SK-N-SH (cell line): ENCODE measurements at regions of chr4 and their contacts with region 1.

Region 1: DNA sequence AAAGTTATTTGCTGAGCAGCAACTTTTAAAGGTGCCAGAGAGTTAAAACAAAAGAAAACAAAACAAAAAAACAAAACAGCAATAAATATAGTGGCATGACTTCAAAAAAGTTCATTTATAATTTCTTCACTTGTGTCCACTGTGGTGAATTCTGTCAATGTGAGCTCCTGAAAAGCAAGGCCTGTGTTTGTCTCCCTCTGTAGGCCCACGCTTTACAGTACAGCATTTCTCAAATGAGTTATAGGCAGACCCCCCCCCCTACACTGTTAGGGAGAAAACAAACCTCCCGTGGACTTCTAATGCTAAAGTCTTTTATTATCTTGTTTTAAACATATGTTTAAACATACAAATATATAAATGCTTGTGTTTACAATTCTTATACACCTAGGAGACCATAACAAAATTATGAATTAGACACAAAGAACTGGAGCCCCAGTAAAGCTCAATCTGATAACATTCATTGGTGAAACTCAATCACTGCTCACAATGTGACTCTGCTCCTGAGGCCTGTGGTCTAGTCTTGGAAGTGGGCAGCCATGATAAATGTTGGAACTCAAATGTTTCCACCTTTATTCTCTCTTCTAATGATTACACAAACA is 47.0 kb upstream of the SCOC start:
- DNase-seq: peak; percentile 54
- H3K4me3 ChIP-seq: peak overlapping the region in 1 of 2 experiments; percentile 26; a peak in 1 of 4 replicates
- H3K27ac ChIP-seq: no peak overlapping the region
- H3K4me1 ChIP-seq: no peaks in the 10 kb centered on the region; a peak in 1 of 4 replicates
- H3K27me3 ChIP-seq: no peaks in the 10 kb centered on the region
- CTCF ChIP-seq: peak; percentile 88
- EP300 ChIP-seq: no peak
- RAD21 ChIP-seq: peak; percentile 85

Region 2: DNA sequence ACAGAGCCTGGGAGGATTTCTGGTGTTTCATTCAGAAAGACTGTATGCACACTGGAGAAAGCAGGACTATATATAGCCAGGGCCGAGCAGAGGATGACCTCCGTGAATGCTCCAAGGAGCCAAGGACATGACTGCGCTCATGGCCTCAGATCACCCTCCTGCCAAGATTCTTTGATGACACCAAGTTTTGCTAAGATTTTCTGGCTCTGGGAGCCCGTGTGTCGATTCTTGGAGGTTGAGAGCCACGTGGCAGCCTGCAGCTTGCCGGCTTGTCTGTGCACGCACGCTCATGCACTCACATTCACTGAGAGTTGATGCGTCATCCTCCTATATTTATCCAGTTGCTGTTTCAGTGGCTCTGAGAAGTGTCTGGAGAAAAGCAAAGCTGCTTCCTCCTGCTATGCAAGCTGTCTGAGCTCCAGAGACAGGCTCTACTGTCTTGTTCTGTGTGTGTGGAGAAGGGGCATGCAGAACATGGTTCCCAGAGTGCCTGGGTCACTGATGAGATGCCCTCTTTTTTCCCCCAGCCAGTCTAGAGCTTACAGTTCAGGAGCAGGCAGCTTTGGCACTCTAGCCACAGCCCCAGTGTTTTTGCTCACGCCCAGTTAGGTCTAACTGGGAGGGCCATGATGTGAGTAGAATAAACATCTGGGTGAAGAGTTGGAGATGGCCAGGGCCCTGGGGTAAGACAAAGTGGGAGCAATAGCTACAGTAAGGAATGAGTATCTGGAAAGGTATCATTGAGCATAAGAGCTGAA is 17.9 kb before region 1 on chr4:
- CTCF ChIA-PET with region 1: interaction called, 19 read pairs
- POLR2A ChIA-PET with region 1: no interaction called
- DNase-seq: no peak
- H3K4me3 ChIP-seq: no peak overlapping the region
- H3K27ac ChIP-seq: peak overlapping the region in 1 of 2 experiments; percentile 75; a peak in 3 of 4 replicates
- H3K4me1 ChIP-seq: peaks cover 6 to 31% of the 10 kb centered on the region in 2 experiments
- H3K27me3 ChIP-seq: no peaks in the 10 kb centered on the region
- CTCF ChIP-seq: no peak
- EP300 ChIP-seq: no peak
- RAD21 ChIP-seq: no peak

Region 3: GRCh38 chr4:140315970-140316369 is 10.5 kb before region 1 on chr4:
- CTCF ChIA-PET with region 1: interaction called, 13 read pairs
- POLR2A ChIA-PET with region 1: no interaction called
- DNase-seq: no peak
- H3K4me3 ChIP-seq: no peak overlapping the region
- H3K27ac ChIP-seq: no peak overlapping the region
- H3K4me1 ChIP-seq: peaks cover 4 to 7% of the 10 kb centered on the region in 2 experiments; a peak in 3 of 4 replicates
- H3K27me3 ChIP-seq: no peaks in the 10 kb centered on the region
- CTCF ChIP-seq: no peak
- EP300 ChIP-seq: no peak
- RAD21 ChIP-seq: no peak

Region 4: DNA sequence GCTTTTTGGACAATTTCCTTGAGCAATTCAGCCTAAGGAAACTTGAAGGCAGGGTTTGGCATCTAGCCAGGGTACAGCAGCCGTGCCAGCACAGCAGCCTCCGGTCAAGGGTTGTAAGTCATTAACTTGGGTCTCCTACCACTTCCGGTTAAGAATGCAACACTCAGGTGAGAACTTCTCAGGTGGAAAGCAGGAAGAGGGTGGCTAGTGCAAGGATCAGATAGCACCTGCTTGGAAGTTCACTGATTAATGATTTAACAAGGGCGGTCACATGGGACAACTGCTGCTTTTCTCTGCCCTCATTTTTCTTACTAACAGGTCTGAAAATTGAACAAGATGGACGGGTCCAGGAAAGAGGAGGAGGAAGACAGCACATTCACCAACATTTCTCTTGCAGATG is 16.8 kb after region 1 on chr4:
- CTCF ChIA-PET with region 1: interaction called, 16 read pairs
- POLR2A ChIA-PET with region 1: no interaction called
- DNase-seq: no peak
- H3K4me3 ChIP-seq: no peak overlapping the region
- H3K27ac ChIP-seq: no peak overlapping the region
- H3K4me1 ChIP-seq: peaks cover 0 to 4% of the 10 kb centered on the region in 2 experiments; a peak in 1 of 4 replicates
- H3K27me3 ChIP-seq: no peaks in the 10 kb centered on the region; the same call in 1 of the 2 replicates
- CTCF ChIP-seq: no peak
- EP300 ChIP-seq: no peak
- RAD21 ChIP-seq: no peak

Region 5: GRCh38 chr4:140351093-140352075 is 24.9 kb after region 1 on chr4:
- CTCF ChIA-PET with region 1: interaction called, 16 read pairs
- POLR2A ChIA-PET with region 1: no interaction called
- DNase-seq: no peak
- H3K4me3 ChIP-seq: no peak overlapping the region
- H3K27ac ChIP-seq: no peak overlapping the region
- H3K4me1 ChIP-seq: peaks cover 0 to 2% of the 10 kb centered on the region in 2 experiments; a peak in 1 of 4 replicates
- H3K27me3 ChIP-seq: no peaks in the 10 kb centered on the region; the same call in 1 of the 2 replicates
- CTCF ChIP-seq: no peak
- EP300 ChIP-seq: no peak
- RAD21 ChIP-seq: no peak

Region 6: GRCh38 chr4:140426610-140427105 is 100.2 kb after region 1 on chr4:
- CTCF ChIA-PET with region 1: no interaction called
- POLR2A ChIA-PET with region 1: no interaction called
- DNase-seq: peak; percentile 74
- H3K4me3 ChIP-seq: peak overlapping the region; percentile 78 to 83
- H3K27ac ChIP-seq: peak overlapping the region in 1 of 2 experiments; percentile 82; a peak in 2 of 4 replicates
- H3K4me1 ChIP-seq: no peaks in the 10 kb centered on the region; a peak in 1 of 4 replicates
- H3K27me3 ChIP-seq: peaks cover 4% of the 10 kb centered on the region; the same call in 1 of the 2 replicates
- CTCF ChIP-seq: no peak; the same call in 1 of the 2 replicates
- EP300 ChIP-seq: no peak
- RAD21 ChIP-seq: no peak

Region 7: DNA sequence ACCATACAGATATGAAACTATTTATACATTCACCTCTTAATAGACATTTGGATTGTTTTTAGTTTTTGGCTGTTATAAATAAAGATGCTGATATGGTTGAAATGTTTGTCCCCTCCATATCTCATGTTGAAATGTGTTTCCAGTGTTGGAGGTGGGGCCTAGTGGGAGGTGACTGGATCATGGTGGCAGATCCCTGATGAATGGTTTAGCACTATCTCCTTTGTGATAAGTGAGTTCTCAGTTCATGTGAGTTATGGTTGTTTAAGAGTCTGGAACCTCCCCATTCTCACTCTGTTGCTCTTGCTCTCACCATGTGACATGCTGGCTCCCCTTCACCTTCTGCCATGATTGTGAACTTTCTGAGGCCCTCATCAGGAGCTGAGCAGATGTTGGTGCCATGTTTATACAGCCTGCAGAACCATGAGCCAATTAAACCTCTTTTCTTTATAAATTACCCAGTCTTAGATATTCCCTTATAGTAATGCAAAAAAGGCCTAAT is 113.2 kb after region 1 on chr4:
- CTCF ChIA-PET with region 1: no interaction called
- POLR2A ChIA-PET with region 1: no interaction called
- DNase-seq: no peak
- H3K4me3 ChIP-seq: no peak overlapping the region
- H3K27ac ChIP-seq: no peak overlapping the region
- H3K4me1 ChIP-seq: no peaks in the 10 kb centered on the region
- H3K27me3 ChIP-seq: peaks cover 5% of the 10 kb centered on the region; the same call in 1 of the 2 replicates
- CTCF ChIP-seq: no peak
- EP300 ChIP-seq: no peak
- RAD21 ChIP-seq: no peak

Region 8: DNA sequence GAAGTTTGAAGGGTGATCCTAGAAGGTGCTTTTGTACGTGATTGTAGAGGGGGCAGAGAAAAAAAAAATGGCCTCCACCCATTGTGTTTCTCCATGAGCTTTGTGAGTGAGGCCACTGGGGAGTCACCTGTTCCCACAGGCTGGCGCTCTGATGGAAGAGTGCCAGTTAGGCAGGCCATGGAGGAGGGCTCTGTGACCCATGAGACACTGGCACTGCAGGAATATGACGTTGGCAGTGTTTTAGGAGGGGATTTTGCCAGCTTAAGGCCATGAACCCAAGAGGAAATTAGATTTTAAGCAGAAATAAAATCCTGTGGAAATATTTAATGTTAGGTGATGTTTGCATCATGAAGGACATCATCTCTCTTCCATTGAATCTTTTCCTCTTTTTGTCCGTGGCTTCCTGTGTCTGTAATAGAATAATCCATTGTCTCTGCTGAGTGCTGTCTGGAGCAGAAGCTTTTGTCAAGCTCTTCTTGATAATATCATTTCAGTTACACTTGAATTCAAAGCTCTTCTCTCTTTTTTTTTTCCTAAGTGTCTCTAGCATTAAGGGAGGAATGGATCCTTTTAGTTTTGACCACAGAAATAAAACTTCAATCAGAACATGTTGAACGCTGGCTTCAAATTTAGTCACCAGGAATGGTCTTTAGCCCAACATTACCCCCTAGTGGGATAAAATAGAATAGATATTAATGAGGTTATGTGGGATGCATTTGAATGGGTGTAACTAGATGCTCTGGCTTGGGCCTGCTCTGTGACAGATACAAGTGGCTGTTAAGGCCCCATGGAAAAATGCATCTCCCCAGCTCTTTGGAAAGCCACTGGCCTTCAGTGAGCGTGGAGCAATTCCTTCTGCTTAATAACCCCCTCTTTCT is 283.3 kb after region 1 on chr4:
- CTCF ChIA-PET with region 1: interaction called, 13 read pairs
- POLR2A ChIA-PET with region 1: no interaction called
- DNase-seq: peak; percentile 83
- H3K4me3 ChIP-seq: no peak overlapping the region
- H3K27ac ChIP-seq: peak overlapping the region in 1 of 2 experiments; percentile 45; a peak in 2 of 4 replicates
- H3K4me1 ChIP-seq: peaks cover 0 to 5% of the 10 kb centered on the region in 2 experiments; a peak in 2 of 4 replicates
- H3K27me3 ChIP-seq: no peaks in the 10 kb centered on the region; the same call in 1 of the 2 replicates
- CTCF ChIP-seq: peak; percentile 68
- EP300 ChIP-seq: no peak
- RAD21 ChIP-seq: peak; percentile 92